Activated B cell treated with CpG ODN at 0.5 μM for 24 hours (primary cell): ENCODE measurements at regions of chr9 and their contacts with region 1.

Region 1: DNA sequence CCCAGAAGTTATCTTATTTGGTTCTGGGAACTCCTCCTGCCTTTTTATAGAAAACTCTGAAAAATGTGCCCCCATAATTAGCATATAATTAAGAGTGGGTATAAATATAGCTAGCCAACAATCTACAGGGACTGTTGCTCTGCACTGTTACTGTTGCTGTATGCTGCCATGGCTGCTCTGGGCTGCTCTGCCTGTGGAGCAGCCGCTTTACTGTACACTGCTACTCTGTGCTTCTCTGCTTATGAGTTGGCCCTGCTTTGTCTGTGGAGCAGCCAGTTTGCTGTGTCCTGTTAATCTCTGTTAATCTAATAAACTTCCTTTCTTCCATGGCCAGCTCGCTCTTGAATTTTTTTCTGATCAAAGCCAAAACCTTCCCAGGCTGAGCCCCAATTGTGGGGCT is 2244.0 kb upstream of the ACO1 start:
- DNase-seq: no peak
- ATAC-seq: no peak
- H3K4me3 Mint-ChIP-seq: no peak overlapping the region
- H3K27ac Mint-ChIP-seq: no peak overlapping the region
- H3K4me1 Mint-ChIP-seq: no peaks in the 10 kb centered on the region
- H3K27me3 Mint-ChIP-seq: no peaks in the 10 kb centered on the region
- CTCF ChIP-seq: no peak

Region 2: GRCh38 chr9:30075451-30076199 is 64.8 kb before region 1 on chr9:
- CTCF ChIA-PET with region 1: no interaction called
- POLR2A ChIA-PET with region 1: no interaction called
- intact Hi-C with region 1: no loop called
- DNase-seq: no peak
- ATAC-seq: no peak
- H3K4me3 Mint-ChIP-seq: no peak overlapping the region
- H3K27ac Mint-ChIP-seq: no peak overlapping the region
- H3K4me1 Mint-ChIP-seq: no peaks in the 10 kb centered on the region
- H3K27me3 Mint-ChIP-seq: no peaks in the 10 kb centered on the region
- CTCF ChIP-seq: no peak

Region 3: GRCh38 chr9:30089428-30089827 is 51.0 kb before region 1 on chr9:
- CTCF ChIA-PET with region 1: no interaction called
- POLR2A ChIA-PET with region 1: no interaction called
- intact Hi-C with region 1: no loop called
- DNase-seq: no peak
- ATAC-seq: no peak
- H3K4me3 Mint-ChIP-seq: no peak overlapping the region
- H3K27ac Mint-ChIP-seq: no peak overlapping the region
- H3K4me1 Mint-ChIP-seq: no peaks in the 10 kb centered on the region
- H3K27me3 Mint-ChIP-seq: no peaks in the 10 kb centered on the region
- CTCF ChIP-seq: no peak

Region 4: GRCh38 chr9:30164658-30165057 is 24.3 kb after region 1 on chr9:
- CTCF ChIA-PET with region 1: no interaction called
- POLR2A ChIA-PET with region 1: no interaction called
- intact Hi-C with region 1: no loop called
- DNase-seq: no peak
- ATAC-seq: no peak
- H3K4me3 Mint-ChIP-seq: no peak overlapping the region
- H3K27ac Mint-ChIP-seq: no peak overlapping the region
- H3K4me1 Mint-ChIP-seq: no peaks in the 10 kb centered on the region
- H3K27me3 Mint-ChIP-seq: no peaks in the 10 kb centered on the region
- CTCF ChIP-seq: no peak

Region 5: GRCh38 chr9:30178586-30178985 is 38.2 kb after region 1 on chr9:
- CTCF ChIA-PET with region 1: no interaction called
- POLR2A ChIA-PET with region 1: no interaction called
- intact Hi-C with region 1: loop called (anchors 10 kb)
- DNase-seq: no peak
- ATAC-seq: no peak
- H3K4me3 Mint-ChIP-seq: no peak overlapping the region
- H3K27ac Mint-ChIP-seq: no peak overlapping the region
- H3K4me1 Mint-ChIP-seq: no peaks in the 10 kb centered on the region
- H3K27me3 Mint-ChIP-seq: no peaks in the 10 kb centered on the region
- CTCF ChIP-seq: no peak

Region 6: DNA sequence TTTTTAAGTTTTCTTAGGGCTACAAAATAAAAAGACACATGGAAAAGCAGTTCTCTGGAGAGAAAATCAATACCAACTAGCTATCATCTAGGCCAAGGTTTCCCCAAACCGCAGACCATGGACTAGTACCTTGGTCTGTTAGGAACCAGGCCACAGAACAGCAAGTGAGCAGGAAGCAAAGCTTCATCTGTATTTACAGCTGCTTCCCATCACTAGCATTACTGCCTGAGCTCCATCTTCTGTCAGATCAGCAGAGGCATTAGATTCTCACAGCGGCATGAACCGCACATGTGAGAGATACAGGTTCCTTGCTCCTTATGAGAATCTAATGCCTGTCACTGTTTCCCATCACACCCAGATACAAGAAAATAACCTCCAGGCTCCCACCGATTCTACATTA is 336.4 kb after region 1 on chr9:
- CTCF ChIA-PET with region 1: no interaction called
- POLR2A ChIA-PET with region 1: no interaction called
- intact Hi-C with region 1: no loop called
- DNase-seq: no peak
- ATAC-seq: no peak
- H3K4me3 Mint-ChIP-seq: no peak overlapping the region
- H3K27ac Mint-ChIP-seq: no peak overlapping the region
- H3K4me1 Mint-ChIP-seq: no peaks in the 10 kb centered on the region
- H3K27me3 Mint-ChIP-seq: no peaks in the 10 kb centered on the region
- CTCF ChIP-seq: no peak